PC-3 (cell line): ENCODE measurements at regions of chr2 and their contacts with region 1.

Region 1: DNA sequence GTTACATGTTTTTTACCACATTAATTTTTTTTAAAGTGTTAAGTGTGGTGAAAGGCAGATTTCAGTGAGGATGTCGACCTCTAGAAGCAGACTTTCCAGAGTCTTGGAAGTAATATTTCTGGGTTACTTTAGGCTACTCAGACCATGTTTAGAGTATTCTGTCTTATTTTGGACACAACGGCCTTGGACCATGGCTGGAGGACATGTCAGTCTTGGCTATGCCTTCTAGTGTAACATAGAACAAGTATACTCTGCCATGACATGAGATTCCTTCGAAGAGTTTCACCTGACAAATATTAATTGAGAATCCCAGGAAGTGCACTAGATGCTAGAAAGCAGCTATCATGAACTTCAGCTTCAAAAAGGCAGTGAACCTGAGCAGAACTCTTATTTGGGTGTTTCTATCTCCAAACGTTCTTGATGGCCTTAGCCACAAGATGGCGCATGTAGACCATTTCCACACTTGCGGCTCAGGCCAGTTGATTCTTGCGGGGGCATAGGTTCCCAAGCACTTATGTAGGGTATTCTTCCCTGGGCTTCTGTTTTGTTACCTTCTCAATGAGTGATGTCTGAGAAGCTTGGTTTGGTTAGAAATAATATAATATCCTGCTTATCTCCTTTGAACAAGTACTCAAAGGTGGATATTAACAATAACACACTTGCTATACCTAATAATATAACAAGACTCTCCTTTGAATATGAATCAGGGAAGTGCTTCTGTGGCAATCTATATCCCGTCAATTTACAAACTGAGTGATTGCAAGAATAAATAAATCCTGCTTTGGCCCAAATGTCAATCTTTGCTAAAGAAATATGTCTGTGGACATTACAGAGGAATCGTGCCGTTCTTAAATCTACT is 62.0 kb downstream of the CACNB4 start:
- DNase-seq: peak; percentile 76
- ATAC-seq: peak; percentile 83
- H3K4me3 ChIP-seq: no peak overlapping the region
- H3K27ac ChIP-seq: no peak overlapping the region
- H3K4me1 ChIP-seq: no peaks in the 10 kb centered on the region
- H3K27me3 ChIP-seq: no peaks in the 10 kb centered on the region
- CTCF ChIP-seq: peak; percentile 92

Region 2: DNA sequence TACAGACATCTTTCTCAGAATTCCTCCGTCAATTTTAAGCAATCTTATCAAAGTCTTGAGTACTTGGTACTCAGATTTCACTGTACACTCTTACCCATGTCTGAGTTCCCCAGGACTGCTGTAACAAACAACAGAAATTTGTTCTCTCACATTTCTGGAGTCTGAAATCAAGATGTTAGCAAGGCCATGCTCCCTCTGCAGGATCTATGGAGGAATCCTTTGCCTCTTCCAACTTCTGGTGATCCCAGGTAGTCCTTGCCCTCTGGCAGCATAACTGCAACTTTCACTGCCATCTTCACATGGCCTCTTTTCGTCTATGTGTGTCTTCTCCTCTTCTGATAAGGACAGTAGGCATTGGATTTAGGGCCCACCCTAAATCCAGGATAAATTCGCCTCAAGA is 79.1 kb after region 1 on chr2:
- CTCF ChIA-PET with region 1: no interaction called
- POLR2A ChIA-PET with region 1: no interaction called
- intact Hi-C with region 1: loop called (anchors 1 kb)
- DNase-seq: peak; percentile 17
- ATAC-seq: peak; percentile 33
- H3K4me3 ChIP-seq: no peak overlapping the region
- H3K27ac ChIP-seq: no peak overlapping the region
- H3K4me1 ChIP-seq: no peaks in the 10 kb centered on the region
- H3K27me3 ChIP-seq: no peaks in the 10 kb centered on the region
- CTCF ChIP-seq: peak; percentile 38; the same call in 1 of the 2 replicates

Region 3: GRCh38 chr2:152126664-152127063 is 89.8 kb after region 1 on chr2:
- CTCF ChIA-PET with region 1: no interaction called
- POLR2A ChIA-PET with region 1: no interaction called
- intact Hi-C with region 1: no loop called
- DNase-seq: peak; percentile 26
- ATAC-seq: no peak
- H3K4me3 ChIP-seq: no peak overlapping the region
- H3K27ac ChIP-seq: no peak overlapping the region
- H3K4me1 ChIP-seq: no peaks in the 10 kb centered on the region
- H3K27me3 ChIP-seq: no peaks in the 10 kb centered on the region
- CTCF ChIP-seq: no peak

Region 4: DNA sequence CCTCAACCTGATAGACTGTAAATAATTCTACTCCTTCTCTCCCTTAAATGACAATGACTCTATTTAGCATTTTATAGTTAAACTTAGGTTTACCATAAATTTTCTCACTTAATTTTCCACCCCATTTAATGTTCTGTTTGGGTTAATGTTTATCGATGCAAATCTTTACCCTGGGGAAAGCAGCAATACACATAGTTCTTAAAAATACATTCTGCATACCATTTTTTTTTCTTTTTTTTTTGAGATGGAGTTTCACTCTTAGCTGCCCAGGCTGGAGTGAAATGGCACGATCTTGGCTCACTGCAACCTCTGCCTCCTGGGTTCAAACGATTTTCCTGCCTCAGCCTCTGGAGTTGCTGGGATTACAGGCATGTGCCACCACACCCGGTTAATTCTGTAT is 124.8 kb after region 1 on chr2:
- CTCF ChIA-PET with region 1: no interaction called
- POLR2A ChIA-PET with region 1: no interaction called
- intact Hi-C with region 1: no loop called
- DNase-seq: no peak
- ATAC-seq: no peak
- H3K4me3 ChIP-seq: no peak overlapping the region
- H3K27ac ChIP-seq: no peak overlapping the region
- H3K4me1 ChIP-seq: peaks cover 2% of the 10 kb centered on the region; the same call in 1 of the 2 replicates
- H3K27me3 ChIP-seq: no peaks in the 10 kb centered on the region
- CTCF ChIP-seq: no peak

Region 5: DNA sequence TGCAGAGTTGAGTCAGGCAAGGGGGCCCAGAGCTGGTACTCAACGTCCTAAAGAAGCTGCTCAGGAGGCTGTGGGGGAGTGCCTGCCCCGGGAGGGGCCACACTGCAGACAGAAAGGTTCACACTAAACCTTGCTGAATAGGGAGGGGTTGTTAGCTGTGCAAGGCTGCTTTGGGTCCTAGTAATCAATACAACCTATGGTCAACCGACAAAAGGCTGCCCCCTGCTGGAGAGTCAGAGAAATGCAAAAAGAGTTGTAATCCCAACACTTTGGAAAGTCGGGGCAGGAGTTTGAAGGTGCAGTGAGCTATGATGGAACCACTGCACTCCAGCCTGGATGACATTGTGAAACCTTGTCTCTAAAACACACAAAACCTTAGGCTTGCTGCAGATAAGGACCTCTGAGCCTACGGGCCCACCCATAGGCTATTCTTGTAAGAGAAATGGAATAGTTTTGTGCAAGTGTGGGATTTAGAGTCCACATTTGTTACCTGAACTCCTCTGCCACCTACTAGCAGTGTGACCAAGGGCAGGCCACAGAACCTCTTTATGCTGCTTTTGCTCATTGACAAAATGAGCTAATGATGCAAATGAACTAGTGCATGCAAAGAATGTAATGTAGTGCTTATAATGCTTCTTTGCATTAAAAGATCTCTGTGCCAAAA is 598.9 kb after region 1 on chr2:
- CTCF ChIA-PET with region 1: no interaction called
- POLR2A ChIA-PET with region 1: no interaction called
- intact Hi-C with region 1: loop called (anchors 5 kb)
- DNase-seq: peak; percentile 69
- ATAC-seq: peak; percentile 84
- H3K4me3 ChIP-seq: no peak overlapping the region
- H3K27ac ChIP-seq: no peak overlapping the region
- H3K4me1 ChIP-seq: no peaks in the 10 kb centered on the region
- H3K27me3 ChIP-seq: no peaks in the 10 kb centered on the region
- CTCF ChIP-seq: peak; percentile 85

Region 6: DNA sequence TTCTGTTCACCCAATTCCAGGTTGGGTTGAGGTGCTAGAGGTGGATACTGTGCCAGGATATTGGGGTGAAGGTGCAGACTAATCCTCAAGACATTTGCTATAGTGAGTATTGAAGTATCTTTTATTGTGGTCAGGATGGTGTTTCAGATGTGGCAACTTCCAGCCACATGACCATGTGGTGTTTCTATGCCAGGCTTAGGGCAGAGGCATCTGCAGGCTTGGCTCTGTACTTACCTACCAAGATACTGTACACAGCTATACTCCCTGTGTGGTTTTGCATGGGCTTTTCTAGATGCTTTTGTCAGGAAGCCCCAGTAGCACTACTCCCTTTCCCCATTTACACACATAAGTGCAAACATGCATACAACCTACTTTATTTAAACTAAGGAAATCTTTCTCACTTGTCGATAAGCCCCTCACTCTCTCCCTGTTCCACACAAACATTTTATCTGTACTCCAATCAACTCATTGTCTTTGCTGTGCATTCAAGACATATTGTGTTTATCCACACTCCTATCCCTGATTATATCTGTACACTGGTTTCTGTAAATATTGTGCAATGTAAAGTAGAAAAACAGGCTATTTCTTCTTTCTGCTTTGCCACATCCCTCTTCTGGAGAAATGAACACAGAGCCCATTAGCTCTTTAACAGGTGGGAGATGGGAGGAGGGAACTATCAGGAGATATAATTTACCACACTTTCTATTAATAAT is 693.9 kb after region 1 on chr2:
- CTCF ChIA-PET with region 1: no interaction called
- POLR2A ChIA-PET with region 1: no interaction called
- intact Hi-C with region 1: loop called (anchors 10 kb)
- DNase-seq: peak; percentile 19
- ATAC-seq: no peak
- H3K4me3 ChIP-seq: no peak overlapping the region
- H3K27ac ChIP-seq: no peak overlapping the region
- H3K4me1 ChIP-seq: peaks cover 11% of the 10 kb centered on the region; the same call in 1 of the 2 replicates
- H3K27me3 ChIP-seq: no peaks in the 10 kb centered on the region
- CTCF ChIP-seq: no peak

Region 7: GRCh38 chr2:153519257-153519875 is 1482.5 kb after region 1 on chr2:
- CTCF ChIA-PET with region 1: no interaction called
- POLR2A ChIA-PET with region 1: no interaction called
- intact Hi-C with region 1: loop called (anchors 5 kb)
- DNase-seq: peak; percentile 77
- ATAC-seq: no peak
- H3K4me3 ChIP-seq: no peak overlapping the region
- H3K27ac ChIP-seq: no peak overlapping the region
- H3K4me1 ChIP-seq: no peaks in the 10 kb centered on the region
- H3K27me3 ChIP-seq: no peaks in the 10 kb centered on the region
- CTCF ChIP-seq: peak; percentile 89